CD4-positive, alpha-beta T cell (primary cell): ENCODE measurements at regions of chr11 and their contacts with region 1.

Region 1: GRCh38 chr11:75333807-75334140 is 17.7 kb downstream of the ARRB1 start:
- DNase-seq: no peak
- ATAC-seq: no peak
- H3K4me3 ChIP-seq: no peak overlapping the region
- H3K4me3 Mint-ChIP-seq: no peak overlapping the region
- H3K27ac ChIP-seq: no peak overlapping the region
- H3K27ac Mint-ChIP-seq: peak overlapping the region; percentile 75
- H3K4me1 ChIP-seq: peaks cover 63% of the 10 kb centered on the region
- H3K4me1 Mint-ChIP-seq: peaks cover 91% of the 10 kb centered on the region
- H3K27me3 ChIP-seq: no peaks in the 10 kb centered on the region
- H3K27me3 Mint-ChIP-seq: no peaks in the 10 kb centered on the region
- CTCF ChIP-seq: no peak

Region 2: DNA sequence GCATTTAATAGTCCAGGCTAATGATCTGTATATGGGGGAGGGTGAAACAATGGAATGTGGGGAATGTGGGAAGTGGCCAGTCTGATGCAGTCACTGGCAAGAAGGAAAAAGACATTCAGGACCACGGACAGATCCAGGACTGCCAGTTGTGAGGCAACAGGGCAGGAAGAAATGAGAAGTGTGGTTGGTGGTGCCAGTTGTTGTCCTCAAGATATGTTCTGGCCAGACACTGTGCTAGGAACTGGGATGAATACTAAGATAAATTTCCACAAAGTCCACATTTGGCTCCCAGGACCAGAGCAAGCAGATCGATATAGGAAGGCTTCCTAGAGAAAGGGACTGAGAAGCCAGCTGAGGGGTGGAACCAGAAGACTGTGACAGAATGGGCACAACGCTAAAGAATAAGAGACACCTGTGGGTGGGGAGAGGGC is 100.0 kb before region 1 on chr11:
- CTCF ChIA-PET with region 1: no interaction called
- POLR2A ChIA-PET with region 1: no interaction called
- intact Hi-C with region 1: no loop called
- DNase-seq: peak in 5 of 14 experiments; percentile 4 to 48 (median 28)
- ATAC-seq: no peak
- H3K4me3 ChIP-seq: no peak overlapping the region
- H3K4me3 Mint-ChIP-seq: no peak overlapping the region
- H3K27ac ChIP-seq: no peak overlapping the region
- H3K27ac Mint-ChIP-seq: no peak overlapping the region
- H3K4me1 ChIP-seq: no peaks in the 10 kb centered on the region
- H3K4me1 Mint-ChIP-seq: no peaks in the 10 kb centered on the region
- H3K27me3 ChIP-seq: peaks cover 5 to 10% of the 10 kb centered on the region in 2 experiments
- H3K27me3 Mint-ChIP-seq: peaks cover 55% of the 10 kb centered on the region
- CTCF ChIP-seq: no peak

Region 3: GRCh38 chr11:75351791-75352587 is 18.2 kb after region 1 on chr11:
- CTCF ChIA-PET with region 1: interaction called, 4 read pairs
- POLR2A ChIA-PET with region 1: interaction called, 77 read pairs
- intact Hi-C with region 1: loop called (anchors 2 kb)
- DNase-seq: peak; percentile 37 to 90 (median 58)
- ATAC-seq: peak; percentile 64
- H3K4me3 ChIP-seq: peak overlapping the region; percentile 74
- H3K4me3 Mint-ChIP-seq: peak overlapping the region; percentile 98
- H3K27ac ChIP-seq: peak overlapping the region; percentile 59 to 68
- H3K27ac Mint-ChIP-seq: peak overlapping the region; percentile 91
- H3K4me1 ChIP-seq: peaks cover 59% of the 10 kb centered on the region
- H3K4me1 Mint-ChIP-seq: peaks cover 68% of the 10 kb centered on the region
- H3K27me3 ChIP-seq: no peaks in the 10 kb centered on the region
- H3K27me3 Mint-ChIP-seq: no peaks in the 10 kb centered on the region
- CTCF ChIP-seq: no peak